CD4-positive, alpha-beta T cell (primary cell): ENCODE measurements at regions of chr10 and their contacts with region 1.

Region 1: DNA sequence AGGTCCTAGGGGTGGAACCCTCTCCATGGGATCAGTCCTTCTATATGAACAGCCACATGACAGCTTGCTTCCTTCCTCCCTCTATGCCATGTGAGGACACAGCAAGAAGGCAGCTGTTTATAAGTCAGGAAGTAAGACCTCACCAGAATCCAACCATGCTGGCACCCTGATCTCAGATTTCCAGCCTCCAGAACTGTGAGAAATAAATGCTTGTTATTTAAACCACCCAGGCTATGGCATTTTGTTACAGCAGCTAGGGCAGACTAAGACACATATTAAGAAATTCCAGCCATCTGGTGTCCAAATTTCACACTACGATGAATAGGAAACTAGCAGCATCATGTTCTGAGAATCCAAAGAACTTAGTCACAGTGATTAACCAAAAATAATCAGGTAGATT is 140.1 kb downstream of the ZFAND4 start:
- DNase-seq: no peak
- ATAC-seq: no peak
- H3K4me3 ChIP-seq: no peak overlapping the region
- H3K4me3 Mint-ChIP-seq: no peak overlapping the region
- H3K27ac ChIP-seq: no peak overlapping the region
- H3K27ac Mint-ChIP-seq: no peak overlapping the region
- H3K4me1 ChIP-seq: no peaks in the 10 kb centered on the region
- H3K4me1 Mint-ChIP-seq: peaks cover 37% of the 10 kb centered on the region
- H3K27me3 ChIP-seq: no peaks in the 10 kb centered on the region
- H3K27me3 Mint-ChIP-seq: no peaks in the 10 kb centered on the region
- CTCF ChIP-seq: no peak

Region 2: DNA sequence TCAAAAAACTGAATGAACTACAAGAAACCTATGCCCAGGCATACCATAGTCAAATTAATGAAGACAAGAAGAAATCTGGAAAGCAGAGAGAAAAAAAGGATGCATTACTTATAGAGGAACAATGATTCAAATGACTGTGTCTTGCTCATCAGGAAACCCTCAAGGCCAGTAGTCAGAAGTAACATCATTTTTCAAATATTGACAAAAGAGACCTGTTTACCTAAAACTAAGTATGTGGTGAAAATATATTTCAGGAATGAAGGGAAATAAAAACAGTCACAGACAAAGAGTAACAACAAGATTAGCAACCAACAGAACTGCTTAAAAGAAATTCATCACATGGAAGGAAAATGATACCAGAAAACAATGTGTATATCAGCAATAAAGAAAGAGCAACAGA is 30.0 kb before region 1 on chr10:
- CTCF ChIA-PET with region 1: no interaction called
- POLR2A ChIA-PET with region 1: no interaction called
- intact Hi-C with region 1: no loop called
- DNase-seq: no peak
- ATAC-seq: no peak
- H3K4me3 ChIP-seq: no peak overlapping the region
- H3K4me3 Mint-ChIP-seq: no peak overlapping the region
- H3K27ac ChIP-seq: no peak overlapping the region
- H3K27ac Mint-ChIP-seq: no peak overlapping the region
- H3K4me1 ChIP-seq: no peaks in the 10 kb centered on the region
- H3K4me1 Mint-ChIP-seq: peaks cover 13% of the 10 kb centered on the region
- H3K27me3 ChIP-seq: no peaks in the 10 kb centered on the region
- H3K27me3 Mint-ChIP-seq: no peaks in the 10 kb centered on the region
- CTCF ChIP-seq: no peak

Region 3: GRCh38 chr10:45557275-45557905 is 24.9 kb after region 1 on chr10:
- CTCF ChIA-PET with region 1: no interaction called
- POLR2A ChIA-PET with region 1: no interaction called
- intact Hi-C with region 1: no loop called
- DNase-seq: peak in 4 of 14 experiments; percentile 19 to 48 (median 30)
- ATAC-seq: no peak
- H3K4me3 ChIP-seq: no peak overlapping the region
- H3K4me3 Mint-ChIP-seq: peak overlapping the region; percentile 27
- H3K27ac ChIP-seq: no peak overlapping the region
- H3K27ac Mint-ChIP-seq: peak overlapping the region; percentile 14
- H3K4me1 ChIP-seq: peaks cover 16% of the 10 kb centered on the region
- H3K4me1 Mint-ChIP-seq: peaks cover 54% of the 10 kb centered on the region
- H3K27me3 ChIP-seq: no peaks in the 10 kb centered on the region
- H3K27me3 Mint-ChIP-seq: no peaks in the 10 kb centered on the region
- CTCF ChIP-seq: no peak

Region 4: GRCh38 chr10:45624724-45625123 is 92.2 kb after region 1 on chr10:
- CTCF ChIA-PET with region 1: no interaction called
- POLR2A ChIA-PET with region 1: no interaction called
- intact Hi-C with region 1: loop called in 1 of 2 experiments (anchors 5 kb)
- DNase-seq: no peak
- ATAC-seq: no peak
- H3K4me3 ChIP-seq: no peak overlapping the region
- H3K4me3 Mint-ChIP-seq: no peak overlapping the region
- H3K27ac ChIP-seq: no peak overlapping the region
- H3K27ac Mint-ChIP-seq: no peak overlapping the region
- H3K4me1 ChIP-seq: no peaks in the 10 kb centered on the region
- H3K4me1 Mint-ChIP-seq: no peaks in the 10 kb centered on the region
- H3K27me3 ChIP-seq: no peaks in the 10 kb centered on the region
- H3K27me3 Mint-ChIP-seq: no peaks in the 10 kb centered on the region
- CTCF ChIP-seq: no peak